ENCODE measurements at regions of chr7 and their contacts with region 1.

Region 1: DNA sequence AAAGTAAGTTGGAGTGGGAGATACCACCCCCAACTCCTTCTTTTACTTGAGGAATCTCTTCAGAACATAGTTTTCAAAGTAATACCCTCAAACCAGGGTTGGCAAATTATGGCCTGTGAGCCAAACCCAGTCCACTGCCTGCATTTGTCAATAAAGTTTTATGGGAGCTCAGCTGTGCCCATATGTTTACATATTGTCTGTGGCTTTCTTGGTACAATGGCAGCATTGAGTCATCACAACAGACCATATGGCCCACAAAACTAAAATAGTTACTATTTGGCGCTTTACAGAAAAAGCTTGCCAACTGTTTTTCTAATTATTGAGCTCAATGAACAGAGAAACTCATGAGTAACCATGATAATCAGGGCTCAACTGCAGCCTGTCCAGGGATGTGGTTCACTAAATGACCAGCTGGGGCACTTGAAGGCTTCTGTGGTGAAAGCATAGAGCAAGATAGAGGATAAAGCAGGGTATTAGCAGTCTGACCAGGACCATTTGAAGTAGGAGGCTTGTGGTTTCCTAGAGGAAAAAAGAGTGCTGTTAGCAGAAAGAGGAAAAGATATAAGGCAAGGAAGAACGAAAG is 196.0 kb upstream of the GRB10 start:
- DNase-seq: no peak
- H3K4me3 ChIP-seq: no peak overlapping the region
- CTCF ChIP-seq: no peak
- POLR2A ChIP-seq: no peak

Region 2: GRCh38 chr7:52547308-52547910 is 1568.7 kb after region 1 on chr7:
- intact Hi-C with region 1: loop called (anchors 5 kb)
- DNase-seq: no peak
- H3K4me3 ChIP-seq: no peak overlapping the region
- CTCF ChIP-seq: no peak
- POLR2A ChIP-seq: no peak